BJ (cell line): ENCODE measurements at regions of chr3 and their contacts with region 1.

Region 1: GRCh38 chr3:167967257-167968036 is 128.3 kb downstream of the GOLIM4 start:
- DNase-seq: no peak
- H3K4me3 ChIP-seq: no peak overlapping the region
- H3K27me3 ChIP-seq: no peaks in the 10 kb centered on the region
- CTCF ChIP-seq: no peak

Region 2: GRCh38 chr3:168796339-168796738 is 828.9 kb after region 1 on chr3:
- CTCF ChIA-PET with region 1: no interaction called
- POLR2A ChIA-PET with region 1: interaction called, 10 read pairs
- DNase-seq: no peak
- H3K4me3 ChIP-seq: no peak overlapping the region
- H3K27me3 ChIP-seq: no peaks in the 10 kb centered on the region
- CTCF ChIP-seq: no peak